ENCODE measurements at regions of chr4 and their contacts with region 1.

Region 1: DNA sequence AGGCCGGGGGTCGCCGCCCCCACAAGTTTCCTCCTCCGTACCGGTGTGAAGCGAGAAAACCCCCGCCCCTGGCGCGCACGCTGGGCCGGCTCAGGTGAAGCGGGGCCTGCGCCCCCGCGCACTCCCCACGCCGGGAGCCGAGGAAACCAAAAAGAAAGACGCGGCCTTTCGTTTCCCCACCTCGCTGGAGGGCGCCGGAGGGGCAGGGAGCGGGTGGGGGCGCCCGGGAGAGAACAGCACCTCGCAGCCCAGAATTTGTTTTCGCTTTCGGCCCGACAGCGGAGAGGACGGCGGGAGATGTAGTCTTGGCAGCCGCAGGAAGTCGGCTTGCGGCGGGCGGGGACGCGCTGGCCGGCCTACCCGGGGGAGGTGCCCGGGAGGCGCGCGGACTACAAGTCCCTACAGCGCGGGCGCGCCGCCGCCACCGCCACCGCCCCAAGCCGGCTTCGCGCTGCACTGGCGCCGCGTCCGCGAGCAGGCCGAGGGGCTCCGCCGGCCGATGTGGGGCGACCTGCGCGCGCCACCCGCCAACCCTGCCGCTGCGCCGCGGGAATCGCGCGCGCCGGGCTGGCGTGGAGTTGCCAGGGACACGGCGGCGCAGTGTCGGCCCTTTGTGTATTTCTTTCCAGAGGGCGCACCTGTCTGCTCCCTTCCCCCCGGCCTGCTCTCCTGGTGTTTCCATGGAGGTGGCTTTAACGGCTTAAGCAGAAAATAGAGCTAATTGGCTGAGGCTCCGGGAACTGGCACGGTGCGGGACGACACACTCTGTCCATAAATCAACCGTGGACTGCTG is at the start of gene OTUD4:
- DNase-seq: peak; percentile 89 to 99 (median 95)

Region 2: GRCh38 chr4:145097821-145098674 is 82.4 kb before region 1 on chr4 and contains the starts of genes ABCE1 and ANAPC10:
- intact Hi-C with region 1: loop called (anchors 2 kb)
- DNase-seq: peak; percentile 84 to 98 (median 90)

Region 3: GRCh38 chr4:145333807-145334206 is 153.3 kb after region 1 on chr4:
- intact Hi-C with region 1: no loop called
- DNase-seq: no peak

Measured in posterior cingulate gyrus (tissue), 11 donors.